ENCODE measurements at regions of chr2 and their contacts with region 1.

Region 1: GRCh38 chr2:65300761-65301711 is 73.4 kb downstream of the ACTR2 start:
- DNase-seq: peak; percentile 91
- H3K4me3 Mint-ChIP-seq: peak overlapping the region; percentile 82
- H3K27ac Mint-ChIP-seq: peak overlapping the region; percentile 93
- H3K4me1 Mint-ChIP-seq: peaks cover 50% of the 10 kb centered on the region
- H3K27me3 Mint-ChIP-seq: peaks cover 30% of the 10 kb centered on the region

Region 2: DNA sequence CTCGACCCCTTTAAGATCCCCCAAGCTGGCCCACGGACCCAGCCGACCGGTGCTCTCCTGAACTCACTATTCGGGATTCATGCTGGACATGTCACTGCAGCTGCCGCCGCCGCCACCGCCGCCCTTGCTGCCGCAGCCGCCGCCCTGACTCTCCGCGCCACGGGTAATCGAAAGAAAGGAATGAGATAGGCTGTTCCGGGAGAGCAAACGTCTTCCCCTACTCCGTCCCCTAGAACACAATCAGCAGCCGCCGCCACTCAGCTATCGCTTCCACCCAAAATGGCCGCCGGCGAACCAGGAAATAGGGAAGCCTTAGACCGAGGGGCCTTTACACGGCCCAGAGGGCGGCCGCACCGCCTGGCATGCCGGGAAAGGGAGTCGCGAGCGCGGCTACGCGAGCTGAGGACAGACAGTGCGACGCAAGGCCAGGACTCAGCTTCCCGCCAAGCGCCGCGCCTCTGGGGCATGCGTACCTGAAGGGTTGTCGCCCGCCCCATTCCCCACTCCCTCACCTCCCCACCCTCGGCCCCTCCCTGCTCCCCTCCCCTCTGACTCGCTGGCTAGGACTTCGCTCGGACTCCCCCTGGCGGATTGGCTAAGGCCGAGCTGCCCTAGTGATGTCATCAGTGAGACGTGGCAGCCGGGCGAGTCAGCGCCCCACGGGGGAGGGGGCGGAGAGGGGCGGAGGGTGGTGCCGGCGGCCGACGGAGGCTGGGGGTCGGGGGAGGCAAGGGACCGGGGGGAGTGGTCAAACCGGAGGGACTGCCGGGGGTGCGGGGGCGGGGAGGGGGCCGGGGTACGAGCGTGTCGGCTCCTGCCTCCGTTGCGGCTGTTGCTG is 171.0 kb before region 1 on chr2 and contains the start of gene RAB1A:
- intact Hi-C with region 1: loop called (anchors 1 kb)
- DNase-seq: peak; percentile 99
- H3K4me3 Mint-ChIP-seq: peak within 1 kb of the TSS; percentile 95
- H3K27ac Mint-ChIP-seq: peak within 1 kb of the TSS; percentile 98
- H3K4me1 Mint-ChIP-seq: peaks cover 24% of the 10 kb centered on the region
- H3K27me3 Mint-ChIP-seq: peaks cover 3% of the 10 kb centered on the region
- total RNA-seq, gene RAB1A: 79.9 and 81.1 TPM in 2 replicates

Region 3: GRCh38 chr2:65264821-65265670 is 36.0 kb before region 1 on chr2:
- intact Hi-C with region 1: loop called (anchors 5 kb)
- DNase-seq: peak; percentile 70
- H3K4me3 Mint-ChIP-seq: no peak overlapping the region
- H3K27ac Mint-ChIP-seq: no peak overlapping the region
- H3K4me1 Mint-ChIP-seq: peaks cover 12% of the 10 kb centered on the region
- H3K27me3 Mint-ChIP-seq: no peaks in the 10 kb centered on the region

Region 4: GRCh38 chr2:65357095-65357958 is 56.3 kb after region 1 on chr2:
- intact Hi-C with region 1: loop called (anchors 1 kb)
- DNase-seq: no peak
- H3K4me3 Mint-ChIP-seq: peak overlapping the region; percentile 35
- H3K27ac Mint-ChIP-seq: peak overlapping the region; percentile 65
- H3K4me1 Mint-ChIP-seq: peaks cover 57% of the 10 kb centered on the region
- H3K27me3 Mint-ChIP-seq: peaks cover 8% of the 10 kb centered on the region

Region 5: DNA sequence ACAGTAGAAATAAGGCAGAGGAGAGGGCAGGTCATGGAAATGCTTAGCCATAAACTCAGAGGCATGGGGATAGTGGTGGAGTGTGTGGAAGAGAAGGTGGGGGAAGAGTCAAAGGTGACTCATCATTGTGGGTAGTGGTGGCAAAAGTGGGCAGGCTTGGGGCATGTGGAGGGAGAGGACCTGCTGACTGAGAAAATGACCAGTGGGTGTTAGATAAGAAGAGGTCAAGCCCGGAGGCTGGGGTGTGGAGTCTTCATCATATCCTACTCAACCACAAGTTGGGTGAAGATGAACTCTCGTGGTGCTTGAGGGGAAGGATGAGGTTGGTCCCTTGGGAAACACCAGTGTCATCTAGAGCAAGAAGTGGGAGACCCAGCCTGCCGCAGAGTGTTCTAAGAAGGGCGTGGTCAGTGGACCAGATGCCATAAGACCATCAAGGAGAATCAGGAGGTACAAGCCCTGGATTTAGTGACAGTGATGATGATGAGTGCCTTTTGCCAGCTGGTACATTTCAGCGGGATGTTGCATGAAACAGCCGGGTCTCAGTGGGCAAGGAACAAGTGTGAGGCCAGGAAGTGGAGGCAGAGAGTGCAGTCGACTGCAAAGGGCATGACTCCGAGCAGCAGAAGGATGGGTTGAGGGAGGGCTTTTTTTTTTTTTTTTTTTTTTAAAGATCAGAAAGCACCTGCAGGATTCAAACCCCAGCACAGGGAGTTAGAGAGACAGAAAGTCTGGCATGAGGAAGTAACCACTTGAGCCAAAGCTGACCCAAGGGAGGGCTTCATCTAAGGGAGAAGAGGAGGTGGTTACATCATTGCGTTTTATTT is 253.9 kb after region 1 on chr2:
- intact Hi-C with region 1: loop called (anchors 1 kb)
- DNase-seq: no peak
- H3K4me3 Mint-ChIP-seq: no peak overlapping the region
- H3K27ac Mint-ChIP-seq: peak overlapping the region; percentile 57
- H3K4me1 Mint-ChIP-seq: peaks cover 16% of the 10 kb centered on the region
- H3K27me3 Mint-ChIP-seq: peaks cover 30% of the 10 kb centered on the region